ENCODE measurements at regions of chr7 and their contacts with region 1.

Region 1: DNA sequence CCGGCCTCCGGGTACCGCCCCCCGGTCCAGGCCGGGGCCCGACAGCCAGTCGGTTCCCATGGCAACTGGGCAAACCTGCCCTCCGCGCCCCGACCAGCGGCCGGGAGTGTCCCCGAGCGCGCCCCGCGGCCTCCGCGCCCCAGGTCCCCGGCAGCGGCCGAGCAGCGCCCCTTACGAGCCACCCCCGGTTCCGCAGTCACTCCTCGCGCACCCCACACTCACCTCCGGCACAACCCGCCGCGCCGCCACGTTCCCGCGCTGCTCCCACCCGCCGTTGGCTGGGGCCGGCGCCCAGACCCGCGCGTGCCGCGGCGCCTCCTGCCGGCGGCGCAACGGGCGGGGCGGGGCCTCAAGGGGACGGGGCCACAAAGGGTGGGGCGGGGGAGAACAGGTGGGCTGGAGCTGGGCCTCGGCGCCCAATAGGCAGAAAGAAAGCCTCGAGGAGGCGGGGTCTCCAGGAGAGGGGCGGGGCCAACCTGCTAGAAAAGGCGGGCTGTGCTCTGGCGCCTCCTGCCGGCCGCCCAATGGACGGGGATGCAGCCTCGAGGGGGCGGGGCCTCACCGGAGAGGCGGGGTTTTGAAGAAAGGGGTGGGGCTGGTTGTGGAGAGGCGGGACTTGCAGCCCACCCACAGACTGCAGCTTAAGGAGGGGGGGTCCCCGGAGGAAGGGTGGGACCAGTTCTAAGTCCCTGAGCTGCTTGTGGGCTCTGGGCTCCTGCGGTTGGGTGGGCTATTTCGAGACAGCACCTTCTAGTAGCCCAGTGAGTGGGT is at the start of gene RADIL:
- DNase-seq: peak; percentile 95
- H3K4me3 Mint-ChIP-seq: peak within 1 kb of the TSS; percentile 64
- H3K27ac Mint-ChIP-seq: no peak within 1 kb of the TSS
- H3K4me1 Mint-ChIP-seq: peaks cover 3% of the 10 kb centered on the region
- H3K27me3 Mint-ChIP-seq: peaks cover 25% of the 10 kb centered on the region
- total RNA-seq, gene RADIL: 0.14 and 0.26 TPM in 2 replicates

Region 2: GRCh38 chr7:4610768-4611467 is 272.6 kb before region 1 on chr7:
- intact Hi-C with region 1: loop called (anchors 10 kb)
- DNase-seq: peak; percentile 89
- H3K4me3 Mint-ChIP-seq: no peak overlapping the region
- H3K27ac Mint-ChIP-seq: no peak overlapping the region
- H3K4me1 Mint-ChIP-seq: peaks cover 10% of the 10 kb centered on the region
- H3K27me3 Mint-ChIP-seq: no peaks in the 10 kb centered on the region

Region 3: GRCh38 chr7:4791738-4792536 is 91.6 kb before region 1 on chr7:
- intact Hi-C with region 1: loop called (anchors 2 kb)
- DNase-seq: peak; percentile 94
- H3K4me3 Mint-ChIP-seq: no peak overlapping the region
- H3K27ac Mint-ChIP-seq: no peak overlapping the region
- H3K4me1 Mint-ChIP-seq: peaks cover 3% of the 10 kb centered on the region
- H3K27me3 Mint-ChIP-seq: no peaks in the 10 kb centered on the region

Region 4: DNA sequence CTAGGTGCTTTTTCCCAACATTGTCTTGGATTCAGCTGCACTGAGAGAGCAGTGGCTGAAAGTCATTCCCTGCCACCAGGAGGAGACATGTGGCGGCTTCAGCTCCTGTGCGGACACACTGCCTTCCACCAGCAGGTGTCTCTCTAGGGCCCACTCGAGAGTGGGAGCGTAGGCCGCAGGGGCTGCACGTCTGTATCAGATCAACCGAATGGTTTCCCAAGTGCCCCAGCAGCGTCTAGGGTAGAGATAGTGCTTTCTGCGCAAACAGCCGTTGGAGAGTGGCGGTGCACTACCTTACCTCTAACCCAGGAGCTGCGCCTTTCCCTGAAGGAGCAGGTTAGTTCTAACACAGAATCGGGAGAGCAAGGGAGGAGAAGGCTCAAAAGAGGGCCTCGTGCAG is 53.4 kb before region 1 on chr7:
- intact Hi-C with region 1: loop called (anchors 2 kb)
- DNase-seq: peak; percentile 86
- H3K4me3 Mint-ChIP-seq: no peak overlapping the region
- H3K27ac Mint-ChIP-seq: no peak overlapping the region
- H3K4me1 Mint-ChIP-seq: peaks cover 4% of the 10 kb centered on the region
- H3K27me3 Mint-ChIP-seq: no peaks in the 10 kb centered on the region

Measured in activated CD4-positive, alpha-beta T cell treated with anti-CD3 and anti-CD28 coated beads, Interleukin-2, amount 10 ng/mL, durations not matched to agents 24 days and 14 days (primary cell).